Gastrocnemius medialis (tissue), 4 donors: ENCODE measurements at regions of chr18 and their contacts with region 1.

Region 1: GRCh38 chr18:30406728-30407127 is 635.8 kb downstream of the DSC3 start:
- DNase-seq: no peak
- ATAC-seq: no peak
- H3K4me3 ChIP-seq: no peak overlapping the region
- H3K27ac ChIP-seq: no peak overlapping the region
- H3K4me1 ChIP-seq: no peaks in the 10 kb centered on the region
- H3K27me3 ChIP-seq: no peaks in the 10 kb centered on the region
- CTCF ChIP-seq: no peak
- POLR2A ChIP-seq: no peak

Region 2: DNA sequence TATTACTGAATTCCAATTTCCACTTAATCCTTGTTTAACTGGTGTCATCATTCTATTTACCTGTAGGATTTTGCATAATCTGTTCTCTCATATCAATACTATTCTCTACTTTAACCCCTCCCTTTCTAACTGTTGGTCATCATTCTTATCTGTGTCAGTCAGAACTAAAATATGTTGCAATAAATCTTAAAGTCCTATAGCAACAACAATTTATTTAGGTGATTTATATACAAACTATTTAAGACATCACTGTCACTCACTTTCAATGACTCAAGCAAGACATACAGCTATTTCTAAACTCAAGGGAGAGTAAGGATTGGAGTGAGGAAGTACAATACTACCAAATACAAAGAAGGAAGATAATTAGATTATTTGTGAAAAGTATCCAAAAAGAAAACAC is 104.5 kb before region 1 on chr18:
- in situ Hi-C with region 1: no loop called
- intact Hi-C with region 1: no loop called
- DNase-seq: no peak
- ATAC-seq: no peak
- H3K4me3 ChIP-seq: no peak overlapping the region
- H3K27ac ChIP-seq: no peak overlapping the region
- H3K4me1 ChIP-seq: no peaks in the 10 kb centered on the region
- H3K27me3 ChIP-seq: no peaks in the 10 kb centered on the region
- CTCF ChIP-seq: no peak
- POLR2A ChIP-seq: no peak

Region 3: DNA sequence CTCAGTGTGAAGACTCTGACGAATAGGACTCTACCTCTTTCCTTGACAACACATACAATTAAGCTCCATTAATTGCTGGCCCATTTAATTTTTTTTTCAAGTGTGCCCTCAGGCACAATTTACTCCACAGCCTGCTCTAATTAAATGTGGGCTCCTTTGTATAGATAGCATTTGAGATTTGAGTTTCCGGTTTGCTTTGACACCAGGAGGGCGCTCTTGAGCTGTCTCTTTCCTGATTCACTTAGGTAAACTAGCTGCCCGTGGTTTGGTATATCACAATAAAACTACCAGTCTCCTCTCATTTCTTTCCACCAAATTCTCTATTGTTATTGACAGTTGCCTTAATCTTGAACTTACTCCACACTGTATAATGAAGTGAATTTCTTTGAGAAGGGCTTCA is 30.2 kb before region 1 on chr18:
- in situ Hi-C with region 1: no loop called
- intact Hi-C with region 1: no loop called
- DNase-seq: no peak
- ATAC-seq: no peak
- H3K4me3 ChIP-seq: no peak overlapping the region
- H3K27ac ChIP-seq: no peak overlapping the region
- H3K4me1 ChIP-seq: no peaks in the 10 kb centered on the region
- H3K27me3 ChIP-seq: no peaks in the 10 kb centered on the region
- CTCF ChIP-seq: no peak
- POLR2A ChIP-seq: no peak

Region 4: DNA sequence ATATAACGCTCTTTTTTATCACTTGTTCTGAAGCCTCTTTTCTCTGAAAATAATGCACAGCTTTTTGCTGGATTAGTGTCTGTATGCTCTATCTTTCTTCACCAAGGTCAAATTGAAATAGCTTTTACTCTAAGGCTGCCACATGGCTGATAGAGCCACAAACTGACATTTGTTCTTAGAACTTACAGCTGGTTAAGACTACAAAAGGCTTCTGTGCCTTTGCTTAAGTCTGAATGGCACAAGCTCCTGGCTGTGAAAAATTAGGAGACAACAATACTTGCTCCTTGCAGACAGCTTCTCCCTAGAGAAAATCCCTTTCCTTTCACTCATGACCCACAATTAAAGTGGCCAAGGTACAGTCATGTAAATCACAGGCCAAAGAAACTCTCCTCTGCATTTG is 120.5 kb after region 1 on chr18:
- in situ Hi-C with region 1: loop called in 1 of 4 experiments (anchors 25 kb)
- intact Hi-C with region 1: no loop called
- DNase-seq: no peak
- ATAC-seq: no peak
- H3K4me3 ChIP-seq: no peak overlapping the region
- H3K27ac ChIP-seq: no peak overlapping the region
- H3K4me1 ChIP-seq: no peaks in the 10 kb centered on the region
- H3K27me3 ChIP-seq: no peaks in the 10 kb centered on the region
- CTCF ChIP-seq: no peak
- POLR2A ChIP-seq: no peak